ENCODE measurements at regions of chr19 and their contacts with region 1.

Region 1: GRCh38 chr19:33302175-33302973 is at the start of gene CEBPA:
- H3K4me3 ChIP-seq: peak within 1 kb of the TSS; percentile 48
- H3K27ac ChIP-seq: peak within 1 kb of the TSS; percentile 98
- H3K4me1 ChIP-seq: peaks cover 68% of the 10 kb centered on the region
- CTCF ChIP-seq: peak; percentile 63; the same call in 1 of the 2 replicates

Region 2: DNA sequence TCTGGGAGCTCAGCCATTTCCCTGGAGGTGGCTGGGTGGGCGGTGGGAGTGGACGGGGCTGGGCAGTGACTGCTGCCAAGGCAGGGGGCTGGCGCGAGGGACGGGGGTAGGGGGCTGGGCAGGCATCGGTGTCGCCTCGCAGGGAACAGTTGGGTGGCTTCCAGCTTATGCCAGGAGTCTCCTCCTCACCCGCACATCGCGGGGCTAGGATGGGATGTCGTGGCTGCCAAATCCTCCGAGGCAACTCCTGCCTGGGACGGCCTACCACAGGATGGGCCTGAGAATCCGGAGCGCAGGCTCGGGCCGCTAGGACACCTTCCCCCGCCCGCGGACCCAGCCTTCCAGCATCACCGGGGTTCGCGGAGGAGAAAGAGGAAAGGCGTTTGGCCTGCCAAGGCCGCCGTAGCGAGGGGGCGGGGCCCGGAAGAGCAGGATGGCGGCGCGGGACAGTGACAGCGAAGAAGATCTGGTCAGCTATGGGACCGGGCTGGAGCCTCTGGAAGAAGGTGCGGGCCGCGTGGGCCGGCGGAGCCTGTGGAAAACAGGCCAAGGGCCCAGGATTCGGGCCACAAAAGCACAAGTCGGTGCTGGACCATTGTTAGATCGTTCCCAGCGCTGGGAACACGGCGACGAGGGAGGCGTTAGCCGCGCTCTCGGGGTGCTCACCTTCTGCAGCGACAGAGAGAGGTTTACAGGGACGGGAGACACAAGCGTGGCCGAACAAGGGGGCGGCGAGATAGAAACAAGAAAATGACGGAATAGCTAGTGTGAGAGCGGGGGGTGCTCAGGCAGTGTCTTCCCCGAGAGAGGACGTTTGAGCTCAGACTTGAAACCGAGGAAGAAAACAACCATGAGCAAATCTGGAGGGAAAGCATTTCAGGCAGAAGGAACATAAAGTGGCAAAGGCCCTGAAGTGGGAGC is 221.4 kb before region 1 on chr19 and contains the start of gene GPATCH1:
- CTCF ChIA-PET with region 1: no interaction called
- POLR2A ChIA-PET with region 1: no interaction called
- H3K4me3 ChIP-seq: peak within 1 kb of the TSS; percentile 66
- H3K27ac ChIP-seq: peak within 1 kb of the TSS; percentile 89
- H3K4me1 ChIP-seq: peaks cover 26% of the 10 kb centered on the region
- CTCF ChIP-seq: peak; percentile 82

Region 3: GRCh38 chr19:33280351-33280921 is 21.9 kb before region 1 on chr19:
- CTCF ChIA-PET with region 1: interaction called, 11 read pairs
- POLR2A ChIA-PET with region 1: interaction called, 6 read pairs
- H3K4me3 ChIP-seq: no peak overlapping the region
- H3K27ac ChIP-seq: peak overlapping the region; percentile 32; the same call in 1 of the 2 replicates
- H3K4me1 ChIP-seq: peaks cover 7% of the 10 kb centered on the region
- CTCF ChIP-seq: 0 out of 2 replicates have a peak, but pooled peaks have one; percentile 13

Region 4: GRCh38 chr19:33379151-33379829 is 76.9 kb after region 1 on chr19:
- CTCF ChIA-PET with region 1: interaction called, 10 read pairs
- POLR2A ChIA-PET with region 1: interaction called, 49 read pairs
- H3K4me3 ChIP-seq: no peak overlapping the region
- H3K27ac ChIP-seq: no peak overlapping the region
- H3K4me1 ChIP-seq: peaks cover 70% of the 10 kb centered on the region
- CTCF ChIP-seq: peak; percentile 60; the same call in 1 of the 2 replicates

Region 5: DNA sequence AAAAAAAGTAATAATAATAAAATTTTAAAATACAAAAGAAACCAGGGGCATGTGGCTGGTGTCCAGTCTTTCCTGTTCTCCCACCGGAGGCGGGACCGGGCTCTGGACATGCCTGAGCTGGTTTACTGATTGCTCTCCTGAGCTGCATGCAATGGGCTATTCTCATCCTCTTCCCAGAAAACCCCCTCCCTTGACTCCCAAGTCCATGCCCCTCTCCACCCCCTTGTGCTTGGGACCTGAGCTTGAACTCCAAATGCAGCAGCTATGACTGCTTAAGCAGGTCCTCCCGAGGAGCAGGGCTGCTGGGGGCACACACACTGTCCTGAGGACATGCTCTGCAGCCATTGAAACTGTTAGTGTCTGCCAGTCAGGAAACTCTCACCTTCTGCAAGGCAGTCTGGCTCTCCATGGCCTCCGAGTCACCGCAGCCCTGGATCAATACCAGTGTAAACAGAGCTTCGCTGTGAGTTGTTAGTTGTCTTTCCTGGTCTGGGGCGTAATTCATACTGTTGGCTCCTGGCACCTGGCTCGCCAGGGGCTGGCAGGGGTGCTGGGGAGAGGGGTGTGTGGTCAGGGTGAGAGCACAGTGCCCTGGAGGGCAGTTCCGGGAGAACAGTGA is 277.8 kb after region 1 on chr19:
- CTCF ChIA-PET with region 1: no interaction called
- POLR2A ChIA-PET with region 1: no interaction called
- H3K4me3 ChIP-seq: no peak overlapping the region
- H3K27ac ChIP-seq: no peak overlapping the region
- H3K4me1 ChIP-seq: no peaks in the 10 kb centered on the region; the same call in 1 of the 2 replicates
- CTCF ChIP-seq: no peak